ENCODE measurements at regions of chr3 and their contacts with region 1.

Region 1: DNA sequence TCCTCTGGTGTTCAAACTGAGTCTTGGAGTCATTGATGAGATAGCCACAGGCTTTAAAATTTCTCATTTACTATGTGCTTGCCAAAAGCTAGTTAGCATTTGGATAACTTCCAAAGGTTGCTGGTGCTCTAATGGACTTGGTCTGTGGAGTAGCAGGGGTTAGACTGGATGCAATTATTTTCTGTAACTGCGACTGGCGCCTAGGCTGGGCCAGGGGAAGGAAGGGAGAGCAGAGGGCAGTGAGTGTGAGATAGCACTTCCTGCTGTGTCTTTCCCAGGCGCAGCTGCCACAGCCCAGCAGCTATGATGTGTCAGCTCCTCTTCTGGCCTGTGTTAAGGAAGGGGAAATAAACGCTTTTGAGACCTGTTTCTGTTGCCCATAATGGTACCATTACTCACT is 98.6 kb downstream of the MYRIP start:
- DNase-seq: peak; percentile 55
- H3K4me3 ChIP-seq: no peak overlapping the region
- H3K27ac ChIP-seq: peak overlapping the region; percentile 41 to 95
- H3K4me1 ChIP-seq: peaks cover 11 to 32% of the 10 kb centered on the region in 2 experiments
- H3K27me3 ChIP-seq: no peaks in the 10 kb centered on the region
- CTCF ChIP-seq: no peak
- EP300 ChIP-seq: peak; percentile 40 to 64; a peak in 3 of 4 replicates
- RAD21 ChIP-seq: peak; percentile 30

Region 2: GRCh38 chr3:39812537-39812936 is 95.4 kb before region 1 on chr3:
- CTCF ChIA-PET with region 1: interaction called, 10 read pairs
- POLR2A ChIA-PET with region 1: no interaction called
- DNase-seq: peak; percentile 31
- H3K4me3 ChIP-seq: no peak overlapping the region
- H3K27ac ChIP-seq: no peak overlapping the region
- H3K4me1 ChIP-seq: peaks cover 0 to 16% of the 10 kb centered on the region in 2 experiments; a peak in 1 of 4 replicates
- H3K27me3 ChIP-seq: peaks cover 16% of the 10 kb centered on the region
- CTCF ChIP-seq: peak; percentile 60
- EP300 ChIP-seq: no peak
- RAD21 ChIP-seq: peak; percentile 67